Activated B cell treated with CpG ODN at 0.5 μM for 24 hours (primary cell): ENCODE measurements at regions of chr22 and their contacts with region 1.

Region 1: GRCh38 chr22:22942511-22943329 is 55.1 kb downstream of the IGLL5 start:
- DNase-seq: peak; percentile 62
- ATAC-seq: peak; percentile 75
- H3K4me3 Mint-ChIP-seq: peak overlapping the region; percentile 29
- H3K27ac Mint-ChIP-seq: peak overlapping the region; percentile 85
- H3K4me1 Mint-ChIP-seq: peaks cover 90% of the 10 kb centered on the region
- H3K27me3 Mint-ChIP-seq: no peaks in the 10 kb centered on the region
- CTCF ChIP-seq: peak; percentile 27

Region 2: GRCh38 chr22:21952586-21953571 is 989.8 kb before region 1 on chr22 and contains the start of gene PPM1F:
- CTCF ChIA-PET with region 1: no interaction called
- POLR2A ChIA-PET with region 1: no interaction called
- intact Hi-C with region 1: no loop called
- DNase-seq: peak; percentile 98
- ATAC-seq: peak; percentile 86
- H3K4me3 Mint-ChIP-seq: peak within 1 kb of the TSS; percentile 93
- H3K27ac Mint-ChIP-seq: peak within 1 kb of the TSS; percentile 76
- H3K4me1 Mint-ChIP-seq: peaks cover 15% of the 10 kb centered on the region
- H3K27me3 Mint-ChIP-seq: no peaks in the 10 kb centered on the region
- CTCF ChIP-seq: no peak
- total RNA-seq, gene PPM1F: 18.2 and 21.1 TPM in 2 replicates

Region 3: GRCh38 chr22:22810018-22810427 is 132.7 kb before region 1 on chr22:
- CTCF ChIA-PET with region 1: interaction called, 20 read pairs
- POLR2A ChIA-PET with region 1: no interaction called
- intact Hi-C with region 1: no loop called
- DNase-seq: peak; percentile 60
- ATAC-seq: peak; percentile 76
- H3K4me3 Mint-ChIP-seq: no peak overlapping the region
- H3K27ac Mint-ChIP-seq: no peak overlapping the region
- H3K4me1 Mint-ChIP-seq: peaks cover 21% of the 10 kb centered on the region
- H3K27me3 Mint-ChIP-seq: peaks cover 3% of the 10 kb centered on the region
- CTCF ChIP-seq: peak; percentile 80

Region 4: DNA sequence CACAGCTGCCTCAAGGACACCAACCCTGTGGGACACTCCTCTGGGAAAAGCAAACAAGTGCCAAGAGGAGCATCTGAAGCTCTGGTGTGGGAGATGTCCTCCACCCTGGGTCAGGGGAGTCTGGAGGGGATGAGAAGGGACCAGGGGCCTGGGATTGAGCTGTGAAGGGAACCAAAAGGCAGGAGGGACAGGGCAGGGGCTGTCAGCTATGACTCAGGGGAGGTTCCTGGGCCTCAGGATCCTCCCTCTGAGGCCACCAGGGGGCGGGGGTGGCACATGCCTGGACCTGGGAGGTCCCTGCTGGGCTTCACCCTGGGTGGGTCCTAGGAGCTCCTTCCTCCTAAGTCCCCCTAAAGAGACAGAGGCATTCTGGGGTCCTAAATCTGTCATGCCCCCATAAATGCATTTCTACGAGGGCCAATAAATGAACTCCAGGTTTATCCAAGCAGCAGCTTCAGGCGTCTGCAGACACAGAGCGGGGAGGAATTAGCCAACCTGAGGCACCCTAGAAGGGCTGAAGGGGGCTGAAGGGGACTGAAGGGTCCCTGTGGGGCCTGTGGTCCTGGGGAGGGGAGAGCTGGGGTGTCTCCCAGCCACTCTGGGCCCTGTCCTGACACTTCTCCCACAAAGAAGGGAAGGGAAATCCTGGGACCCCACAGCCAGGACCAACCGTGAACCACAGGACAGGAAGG is 87.0 kb before region 1 on chr22:
- CTCF ChIA-PET with region 1: interaction called, 53 read pairs
- POLR2A ChIA-PET with region 1: interaction called, 5 read pairs
- intact Hi-C with region 1: no loop called
- DNase-seq: peak; percentile 53
- ATAC-seq: peak; percentile 79
- H3K4me3 Mint-ChIP-seq: no peak overlapping the region
- H3K27ac Mint-ChIP-seq: peak overlapping the region; percentile 4
- H3K4me1 Mint-ChIP-seq: peaks cover 35% of the 10 kb centered on the region
- H3K27me3 Mint-ChIP-seq: peaks cover 10% of the 10 kb centered on the region
- CTCF ChIP-seq: no peak

Region 5: DNA sequence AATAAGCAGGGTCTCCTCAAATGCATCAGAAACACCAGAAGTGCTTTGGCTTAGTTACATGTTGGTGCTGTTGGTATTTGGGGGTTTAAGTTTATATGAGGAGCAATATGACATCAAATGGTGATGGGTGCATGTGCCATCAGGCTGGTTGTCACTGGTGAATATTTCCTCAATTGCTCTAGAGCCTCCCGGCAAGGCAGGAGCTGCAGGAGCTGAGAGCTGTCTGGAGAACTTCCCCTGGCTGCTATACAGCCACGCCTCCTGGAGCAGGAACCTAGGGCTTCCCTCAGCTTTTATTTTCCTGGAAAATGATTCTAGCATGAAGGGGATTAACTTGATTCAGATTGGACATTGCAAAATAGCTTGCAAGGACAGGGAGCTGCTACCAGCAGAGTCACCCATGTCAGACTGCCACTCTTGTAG is 39.4 kb before region 1 on chr22:
- CTCF ChIA-PET with region 1: interaction called, 11 read pairs
- POLR2A ChIA-PET with region 1: interaction called, 427 read pairs
- intact Hi-C with region 1: no loop called
- DNase-seq: no peak
- ATAC-seq: no peak
- H3K4me3 Mint-ChIP-seq: peak overlapping the region; percentile 87
- H3K27ac Mint-ChIP-seq: peak overlapping the region; percentile 76
- H3K4me1 Mint-ChIP-seq: peaks cover 66% of the 10 kb centered on the region
- H3K27me3 Mint-ChIP-seq: no peaks in the 10 kb centered on the region
- CTCF ChIP-seq: no peak

Region 6: GRCh38 chr22:23237201-23237798 is 294.6 kb after region 1 on chr22:
- CTCF ChIA-PET with region 1: no interaction called
- POLR2A ChIA-PET with region 1: no interaction called
- intact Hi-C with region 1: no loop called
- DNase-seq: no peak
- ATAC-seq: no peak
- H3K4me3 Mint-ChIP-seq: no peak overlapping the region
- H3K27ac Mint-ChIP-seq: no peak overlapping the region
- H3K4me1 Mint-ChIP-seq: peaks cover 37% of the 10 kb centered on the region
- H3K27me3 Mint-ChIP-seq: no peaks in the 10 kb centered on the region
- CTCF ChIP-seq: no peak